ENCODE measurements at regions of chr1 and their contacts with region 1.

Region 1: GRCh38 chr1:53485478-53486394 is 26.5 kb downstream of the DMRTB1 start:
- DNase-seq: peak; percentile 93
- ATAC-seq: peak; percentile 87
- H3K4me3 Mint-ChIP-seq: no peak overlapping the region
- H3K27ac Mint-ChIP-seq: no peak overlapping the region
- H3K4me1 Mint-ChIP-seq: peaks cover 13% of the 10 kb centered on the region
- H3K27me3 Mint-ChIP-seq: no peaks in the 10 kb centered on the region; the same call in 1 of the 2 replicates
- CTCF ChIP-seq: peak; percentile 74

Region 2: DNA sequence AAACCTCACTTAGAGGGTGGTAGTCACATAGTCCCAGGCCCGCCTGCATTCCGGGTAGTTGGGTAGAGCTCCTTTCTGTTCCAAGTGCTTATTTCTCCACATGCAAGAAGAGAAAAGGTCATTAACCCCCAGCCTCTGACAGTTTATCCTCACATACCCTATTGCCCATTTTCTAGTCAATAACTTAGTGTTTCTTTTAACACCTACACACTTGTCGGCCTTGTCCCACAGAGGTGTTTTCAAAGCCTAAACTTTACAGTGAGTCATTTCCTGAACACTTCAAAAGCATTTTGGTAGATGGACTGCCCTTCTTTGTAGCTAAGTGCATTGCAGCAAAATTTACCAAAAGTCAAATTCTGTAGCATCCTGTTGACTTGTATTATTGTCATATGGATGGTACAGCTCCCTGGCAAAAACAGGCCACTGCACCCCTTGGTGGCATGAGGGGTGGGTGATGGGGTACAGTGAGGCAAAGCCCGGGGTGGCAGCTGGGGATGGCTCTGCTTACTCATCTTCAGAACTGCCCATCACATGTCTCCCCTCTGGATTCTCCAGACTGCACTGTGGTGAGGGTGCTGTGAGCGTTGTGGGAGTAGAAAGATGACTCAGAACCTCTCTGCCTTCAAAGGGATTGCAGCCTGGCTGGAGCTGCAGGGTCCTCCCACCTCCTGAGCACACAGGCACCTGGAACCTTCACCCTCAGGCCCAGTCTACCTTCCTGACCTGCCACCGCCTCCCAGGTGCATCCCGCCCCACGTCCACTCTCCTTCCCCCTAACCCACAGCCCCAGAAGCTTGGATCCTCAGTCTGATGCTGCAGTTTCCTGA is 72.3 kb before region 1 on chr1:
- CTCF ChIA-PET with region 1: no interaction called
- POLR2A ChIA-PET with region 1: no interaction called
- DNase-seq: no peak
- ATAC-seq: no peak
- H3K4me3 Mint-ChIP-seq: no peak overlapping the region
- H3K27ac Mint-ChIP-seq: no peak overlapping the region
- H3K4me1 Mint-ChIP-seq: peaks cover 50% of the 10 kb centered on the region
- H3K27me3 Mint-ChIP-seq: peaks cover 26% of the 10 kb centered on the region
- CTCF ChIP-seq: no peak

Region 3: DNA sequence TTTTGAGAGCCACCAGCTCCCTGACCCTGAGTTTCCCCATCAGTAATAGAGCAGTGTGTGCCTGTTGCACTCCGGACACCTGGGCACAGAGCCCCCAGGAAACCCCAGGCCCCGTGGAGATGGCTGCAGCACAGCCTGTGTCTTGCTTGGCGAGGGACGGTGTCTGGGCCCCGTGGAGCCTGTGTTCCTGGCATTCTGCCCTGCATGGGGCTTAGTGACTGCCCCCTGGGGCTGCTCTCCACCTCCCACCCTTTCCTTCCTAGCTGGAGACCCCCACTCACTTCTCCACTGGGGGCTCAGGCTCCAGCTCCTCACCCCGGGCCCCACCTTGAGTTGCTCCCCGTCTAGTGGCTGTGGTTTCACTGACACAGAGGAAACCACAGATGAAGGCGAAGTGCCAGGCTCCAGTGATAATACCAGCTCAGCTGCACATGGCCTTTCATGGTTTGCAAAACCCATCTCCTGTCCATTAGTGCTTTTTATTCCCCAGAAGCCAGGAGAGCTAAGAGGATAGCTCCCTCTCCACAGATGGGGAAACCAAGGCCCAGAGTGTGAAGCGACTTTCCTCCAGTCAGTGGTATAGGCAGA is 12.9 kb after region 1 on chr1:
- CTCF ChIA-PET with region 1: interaction called, 22 read pairs
- POLR2A ChIA-PET with region 1: no interaction called
- DNase-seq: no peak
- ATAC-seq: no peak
- H3K4me3 Mint-ChIP-seq: no peak overlapping the region
- H3K27ac Mint-ChIP-seq: no peak overlapping the region
- H3K4me1 Mint-ChIP-seq: peaks cover 14% of the 10 kb centered on the region
- H3K27me3 Mint-ChIP-seq: no peaks in the 10 kb centered on the region
- CTCF ChIP-seq: no peak

Region 4: GRCh38 chr1:53526451-53527101 is 40.8 kb after region 1 on chr1:
- CTCF ChIA-PET with region 1: interaction called, 17 read pairs
- POLR2A ChIA-PET with region 1: no interaction called
- DNase-seq: peak; percentile 27
- ATAC-seq: peak; percentile 18
- H3K4me3 Mint-ChIP-seq: no peak overlapping the region
- H3K27ac Mint-ChIP-seq: no peak overlapping the region
- H3K4me1 Mint-ChIP-seq: peaks cover 9% of the 10 kb centered on the region
- H3K27me3 Mint-ChIP-seq: peaks cover 5% of the 10 kb centered on the region
- CTCF ChIP-seq: no peak

Region 5: GRCh38 chr1:53585129-53585528 is 99.4 kb after region 1 on chr1:
- CTCF ChIA-PET with region 1: interaction called, 192 read pairs
- POLR2A ChIA-PET with region 1: no interaction called
- DNase-seq: no peak
- ATAC-seq: no peak
- H3K4me3 Mint-ChIP-seq: no peak overlapping the region
- H3K27ac Mint-ChIP-seq: no peak overlapping the region
- H3K4me1 Mint-ChIP-seq: peaks cover 19% of the 10 kb centered on the region
- H3K27me3 Mint-ChIP-seq: no peaks in the 10 kb centered on the region; the same call in 1 of the 2 replicates
- CTCF ChIP-seq: no peak

Region 6: GRCh38 chr1:53681977-53682685 is 196.4 kb after region 1 on chr1:
- CTCF ChIA-PET with region 1: interaction called, 57 read pairs
- POLR2A ChIA-PET with region 1: no interaction called
- DNase-seq: peak; percentile 84
- ATAC-seq: peak; percentile 88
- H3K4me3 Mint-ChIP-seq: peak overlapping the region; percentile 17; the same call in 1 of the 2 replicates
- H3K27ac Mint-ChIP-seq: no peak overlapping the region
- H3K4me1 Mint-ChIP-seq: peaks cover 35% of the 10 kb centered on the region
- H3K27me3 Mint-ChIP-seq: peaks cover 20% of the 10 kb centered on the region
- CTCF ChIP-seq: peak; percentile 39

Region 7: DNA sequence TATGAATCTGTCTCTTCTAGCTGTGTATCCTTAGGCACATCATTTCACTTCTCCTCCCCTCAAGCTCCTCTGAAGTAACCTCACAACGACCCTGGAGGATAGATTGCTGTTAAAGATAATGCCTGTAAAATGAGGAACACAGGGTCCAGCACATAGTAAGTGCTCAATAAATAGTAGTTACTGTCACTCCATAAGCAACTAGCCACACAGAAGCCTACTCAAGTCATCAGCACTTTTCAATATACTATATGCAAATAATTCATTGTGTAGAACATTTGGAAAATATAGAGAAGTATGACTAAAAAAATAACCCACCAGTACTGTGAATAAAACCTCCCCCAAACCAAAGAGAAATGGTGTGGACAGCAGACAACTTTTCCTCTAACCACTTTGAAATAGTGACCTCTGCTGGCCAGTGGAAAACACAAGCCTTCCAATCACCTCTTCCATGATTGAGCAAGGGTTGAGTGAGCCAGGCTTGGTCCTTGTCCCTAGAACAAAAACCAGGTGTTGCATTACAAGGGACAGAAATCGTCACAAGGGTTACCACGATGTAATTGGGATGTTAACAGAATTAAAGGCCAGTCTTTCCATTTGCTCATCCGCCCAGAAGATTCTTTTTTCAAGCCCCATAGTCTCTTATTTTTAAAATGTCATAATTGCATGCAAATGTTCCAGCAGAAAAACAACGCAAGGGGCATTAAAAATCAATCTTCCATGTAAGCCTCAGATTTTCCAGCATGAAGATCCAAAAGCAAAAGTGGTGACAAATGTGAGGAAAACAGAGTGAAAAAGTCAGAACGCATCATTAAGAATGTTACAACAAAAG is 269.0 kb after region 1 on chr1:
- CTCF ChIA-PET with region 1: interaction called, 11 read pairs
- POLR2A ChIA-PET with region 1: no interaction called
- DNase-seq: peak; percentile 64
- ATAC-seq: peak; percentile 86
- H3K4me3 Mint-ChIP-seq: no peak overlapping the region
- H3K27ac Mint-ChIP-seq: no peak overlapping the region
- H3K4me1 Mint-ChIP-seq: peaks cover 5% of the 10 kb centered on the region
- H3K27me3 Mint-ChIP-seq: no peaks in the 10 kb centered on the region
- CTCF ChIP-seq: peak; percentile 49; the same call in 1 of the 2 replicates